Activated T-helper 1 cell treated with anti-CD3 and anti-CD28 coated beads, Interleukin-12 subunit alpha, Interleukin-12 subunit beta, Interleukin-2, Interleukin-4 antibody, amounts not matched to agents 30 ng/mL and 10 ng/mL and 1 ng/mL, durations not matched to agents 14 hours and 24 hours and 36 hours (primary cell): ENCODE measurements at regions of chrX and their contacts with region 1.

Region 1: GRCh38 chrX:24054182-24055042 is at the start of gene EIF2S3:
- DNase-seq: peak; percentile 81
- H3K4me3 Mint-ChIP-seq: no peak within 1 kb of the TSS
- H3K27ac Mint-ChIP-seq: peak within 1 kb of the TSS; percentile 98
- H3K4me1 Mint-ChIP-seq: no peaks in the 10 kb centered on the region
- H3K27me3 Mint-ChIP-seq: no peaks in the 10 kb centered on the region
- total RNA-seq, gene EIF2S3: 191 and 194 TPM in 2 replicates

Region 2: GRCh38 chrX:23667239-23668177 is 386.9 kb before region 1 on chrX and contains the start of gene PRDX4:
- intact Hi-C with region 1: loop called (anchors 10 kb)
- DNase-seq: peak; percentile 66
- H3K4me3 Mint-ChIP-seq: peak within 1 kb of the TSS; percentile 88
- H3K27ac Mint-ChIP-seq: peak within 1 kb of the TSS; percentile 94
- H3K4me1 Mint-ChIP-seq: peaks cover 37% of the 10 kb centered on the region
- H3K27me3 Mint-ChIP-seq: no peaks in the 10 kb centered on the region
- total RNA-seq, gene PRDX4: 75.5 and 83.2 TPM in 2 replicates

Region 3: GRCh38 chrX:23732704-23733103 is 321.7 kb before region 1 on chrX:
- intact Hi-C with region 1: loop called (anchors 2 kb)
- DNase-seq: no peak
- H3K4me3 Mint-ChIP-seq: peak overlapping the region; percentile 30
- H3K27ac Mint-ChIP-seq: peak overlapping the region; percentile 83
- H3K4me1 Mint-ChIP-seq: peaks cover 29% of the 10 kb centered on the region
- H3K27me3 Mint-ChIP-seq: no peaks in the 10 kb centered on the region

Region 4: GRCh38 chrX:23907498-23908218 is 146.8 kb before region 1 on chrX and contains the starts of genes APOO and CXorf58:
- intact Hi-C with region 1: loop called (anchors 1 kb)
- DNase-seq: peak; percentile 88
- H3K4me3 Mint-ChIP-seq: peak within 1 kb of the TSS; percentile 85
- H3K27ac Mint-ChIP-seq: peak within 1 kb of the TSS; percentile 89
- H3K4me1 Mint-ChIP-seq: peaks cover 13% of the 10 kb centered on the region
- H3K27me3 Mint-ChIP-seq: no peaks in the 10 kb centered on the region
- total RNA-seq, gene APOO: 29.0 and 30.0 TPM in 2 replicates
- total RNA-seq, gene CXorf58: not detected in 2 replicates

Region 5: GRCh38 chrX:24014388-24015018 is 39.9 kb before region 1 on chrX:
- intact Hi-C with region 1: loop called (anchors 5 kb)
- DNase-seq: peak; percentile 21
- H3K4me3 Mint-ChIP-seq: peak overlapping the region; percentile 64
- H3K27ac Mint-ChIP-seq: peak overlapping the region; percentile 89
- H3K4me1 Mint-ChIP-seq: peaks cover 36% of the 10 kb centered on the region
- H3K27me3 Mint-ChIP-seq: no peaks in the 10 kb centered on the region

Region 6: DNA sequence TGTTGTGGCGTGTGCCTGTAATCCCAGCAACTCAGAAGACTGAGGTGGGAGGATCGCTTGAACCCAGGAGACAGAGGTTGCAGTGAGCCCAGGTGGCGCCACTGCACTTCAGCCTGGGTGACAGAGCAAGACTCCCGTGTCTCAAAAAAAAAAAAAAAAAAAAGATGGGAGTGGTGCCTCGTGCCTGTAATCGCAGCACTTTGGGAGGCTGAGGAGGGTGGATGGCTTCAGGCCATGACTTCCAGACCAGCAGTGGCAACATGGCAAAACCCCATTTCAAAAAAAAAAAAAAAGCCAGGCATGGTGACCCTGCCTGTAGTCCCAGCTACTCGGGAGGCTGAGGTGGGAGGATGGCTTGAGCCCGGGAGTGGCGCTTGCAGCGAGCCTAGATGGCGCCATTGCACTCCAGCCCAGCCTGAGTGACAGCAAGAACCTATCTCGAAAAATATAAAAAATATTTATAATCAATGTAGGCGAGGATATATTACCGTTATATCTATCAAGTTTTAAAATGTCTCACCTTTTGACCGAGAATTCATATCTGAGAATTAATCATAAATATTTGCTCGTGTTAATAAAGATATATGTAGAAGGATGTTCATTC is 27.4 kb after region 1 on chrX:
- intact Hi-C with region 1: loop called (anchors 1 kb)
- DNase-seq: peak; percentile 21
- H3K4me3 Mint-ChIP-seq: peak overlapping the region; percentile 11
- H3K27ac Mint-ChIP-seq: no peak overlapping the region
- H3K4me1 Mint-ChIP-seq: peaks cover 13% of the 10 kb centered on the region
- H3K27me3 Mint-ChIP-seq: no peaks in the 10 kb centered on the region